CD8-positive, alpha-beta T cell (primary cell): ENCODE measurements at regions of chr3 and their contacts with region 1.

Region 1: GRCh38 chr3:167734498-167735232 is at the start of gene PDCD10:
- DNase-seq: peak; percentile 89 to 99 (median 96)
- ATAC-seq: peak; percentile 85
- H3K4me3 ChIP-seq: peak within 1 kb of the TSS; percentile 60 to 95
- H3K4me3 Mint-ChIP-seq: no peak within 1 kb of the TSS
- H3K27ac ChIP-seq: peak within 1 kb of the TSS; percentile 50 to 90
- H3K27ac Mint-ChIP-seq: no peak within 1 kb of the TSS
- H3K4me1 ChIP-seq: peaks cover 29% of the 10 kb centered on the region
- H3K4me1 Mint-ChIP-seq: peaks cover 36% of the 10 kb centered on the region
- H3K27me3 ChIP-seq: no peaks in the 10 kb centered on the region
- H3K27me3 Mint-ChIP-seq: no peaks in the 10 kb centered on the region
- CTCF ChIP-seq: no peak
- total RNA-seq, gene PDCD10: 24.7 to 27.6 TPM

Region 2: DNA sequence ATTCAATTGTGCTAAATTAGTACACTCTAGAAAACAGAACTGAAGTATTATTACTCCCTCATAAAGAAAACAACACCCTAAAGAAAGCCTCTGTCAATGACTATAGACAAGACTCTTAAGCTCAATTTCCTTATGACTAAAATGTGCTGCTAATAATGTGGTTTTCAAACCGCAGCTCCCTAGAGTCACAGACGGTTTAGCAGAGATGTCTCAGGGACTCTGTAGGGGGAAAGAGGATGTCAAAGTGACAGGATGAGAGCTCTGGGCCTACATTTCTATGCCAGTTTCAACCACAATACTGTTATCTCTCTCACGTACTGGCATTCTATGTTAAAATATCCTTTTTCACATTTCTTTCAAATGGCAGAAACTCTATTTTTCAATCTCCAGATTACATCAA is 43.3 kb before region 1 on chr3:
- CTCF ChIA-PET with region 1: no interaction called
- POLR2A ChIA-PET with region 1: no interaction called
- intact Hi-C with region 1: loop called in 1 of 2 experiments (anchors 2 kb)
- DNase-seq: peak in 5 of 9 experiments; percentile 3 to 71 (median 29)
- ATAC-seq: peak; percentile 95
- H3K4me3 ChIP-seq: no peak overlapping the region
- H3K4me3 Mint-ChIP-seq: no peak overlapping the region
- H3K27ac ChIP-seq: peak overlapping the region; percentile 9 to 22
- H3K27ac Mint-ChIP-seq: peak overlapping the region; percentile 69
- H3K4me1 ChIP-seq: peaks cover 11% of the 10 kb centered on the region
- H3K4me1 Mint-ChIP-seq: peaks cover 23% of the 10 kb centered on the region
- H3K27me3 ChIP-seq: no peaks in the 10 kb centered on the region
- H3K27me3 Mint-ChIP-seq: no peaks in the 10 kb centered on the region
- CTCF ChIP-seq: no peak

Region 3: GRCh38 chr3:167716920-167717319 is 17.7 kb before region 1 on chr3:
- CTCF ChIA-PET with region 1: no interaction called
- POLR2A ChIA-PET with region 1: no interaction called
- intact Hi-C with region 1: loop called in 1 of 2 experiments (anchors 2 kb)
- DNase-seq: no peak
- ATAC-seq: no peak
- H3K4me3 ChIP-seq: no peak overlapping the region
- H3K4me3 Mint-ChIP-seq: no peak overlapping the region
- H3K27ac ChIP-seq: no peak overlapping the region
- H3K27ac Mint-ChIP-seq: no peak overlapping the region
- H3K4me1 ChIP-seq: peaks cover 28% of the 10 kb centered on the region
- H3K4me1 Mint-ChIP-seq: peaks cover 70% of the 10 kb centered on the region
- H3K27me3 ChIP-seq: no peaks in the 10 kb centered on the region
- H3K27me3 Mint-ChIP-seq: no peaks in the 10 kb centered on the region
- CTCF ChIP-seq: no peak

Region 4: GRCh38 chr3:167941234-167941995 is 206.8 kb after region 1 on chr3:
- CTCF ChIA-PET with region 1: no interaction called
- POLR2A ChIA-PET with region 1: no interaction called
- intact Hi-C with region 1: no loop called
- DNase-seq: no peak
- ATAC-seq: no peak
- H3K4me3 ChIP-seq: no peak overlapping the region
- H3K4me3 Mint-ChIP-seq: no peak overlapping the region
- H3K27ac ChIP-seq: no peak overlapping the region
- H3K27ac Mint-ChIP-seq: no peak overlapping the region
- H3K4me1 ChIP-seq: no peaks in the 10 kb centered on the region
- H3K4me1 Mint-ChIP-seq: no peaks in the 10 kb centered on the region
- H3K27me3 ChIP-seq: no peaks in the 10 kb centered on the region
- H3K27me3 Mint-ChIP-seq: peaks cover 6% of the 10 kb centered on the region
- CTCF ChIP-seq: no peak